MCF 10A (cell line): ENCODE measurements at regions of chr7 and their contacts with region 1.

Region 1: DNA sequence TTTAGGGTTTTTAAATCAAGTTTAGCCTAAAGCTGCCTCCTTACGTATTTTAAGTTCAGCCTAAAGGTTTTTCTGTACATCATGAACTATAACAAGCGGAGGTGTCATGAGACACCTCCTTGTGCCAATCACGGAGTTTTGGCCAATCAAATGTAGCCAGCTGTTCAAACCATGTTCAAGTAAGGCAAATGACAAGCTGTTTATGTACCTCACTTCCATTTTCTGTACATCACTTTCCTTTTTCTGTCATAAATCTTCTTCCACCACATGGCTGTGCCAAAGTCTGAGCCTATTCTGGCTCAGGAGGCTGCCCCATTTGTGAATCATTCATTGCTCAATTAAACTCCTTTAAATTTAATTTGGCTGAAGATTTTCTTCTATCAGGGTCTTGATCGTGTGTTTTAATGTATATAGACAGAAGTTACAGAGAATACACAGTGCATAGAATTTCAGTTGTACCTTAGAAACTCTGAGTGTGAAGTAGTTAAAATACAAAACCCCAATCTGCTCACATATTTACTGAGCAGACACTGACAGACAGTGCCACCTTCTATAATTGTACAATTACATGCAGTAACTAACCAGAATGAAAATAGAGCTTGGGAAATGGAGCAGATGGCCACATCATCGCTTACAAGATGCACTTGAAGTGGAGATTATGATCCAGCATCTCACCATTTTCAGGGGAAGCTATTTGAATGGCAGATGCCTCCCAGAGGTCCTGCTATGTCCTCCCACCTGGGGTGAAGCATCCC is 76.9 kb upstream of the LANCL2 start:
- DNase-seq: peak; percentile 29
- H3K4me3 Mint-ChIP-seq: no peak overlapping the region
- H3K27ac Mint-ChIP-seq: no peak overlapping the region
- H3K4me1 Mint-ChIP-seq: no peaks in the 10 kb centered on the region
- H3K27me3 Mint-ChIP-seq: peaks cover 87% of the 10 kb centered on the region
- CTCF ChIP-seq: no peak

Region 2: GRCh38 chr7:55237156-55237893 is 50.9 kb before region 1 on chr7:
- CTCF ChIA-PET with region 1: no interaction called
- POLR2A ChIA-PET with region 1: no interaction called
- intact Hi-C with region 1: no loop called
- DNase-seq: no peak
- H3K4me3 Mint-ChIP-seq: no peak overlapping the region
- H3K27ac Mint-ChIP-seq: no peak overlapping the region
- H3K4me1 Mint-ChIP-seq: no peaks in the 10 kb centered on the region
- H3K27me3 Mint-ChIP-seq: peaks cover 52% of the 10 kb centered on the region
- CTCF ChIP-seq: no peak

Region 3: DNA sequence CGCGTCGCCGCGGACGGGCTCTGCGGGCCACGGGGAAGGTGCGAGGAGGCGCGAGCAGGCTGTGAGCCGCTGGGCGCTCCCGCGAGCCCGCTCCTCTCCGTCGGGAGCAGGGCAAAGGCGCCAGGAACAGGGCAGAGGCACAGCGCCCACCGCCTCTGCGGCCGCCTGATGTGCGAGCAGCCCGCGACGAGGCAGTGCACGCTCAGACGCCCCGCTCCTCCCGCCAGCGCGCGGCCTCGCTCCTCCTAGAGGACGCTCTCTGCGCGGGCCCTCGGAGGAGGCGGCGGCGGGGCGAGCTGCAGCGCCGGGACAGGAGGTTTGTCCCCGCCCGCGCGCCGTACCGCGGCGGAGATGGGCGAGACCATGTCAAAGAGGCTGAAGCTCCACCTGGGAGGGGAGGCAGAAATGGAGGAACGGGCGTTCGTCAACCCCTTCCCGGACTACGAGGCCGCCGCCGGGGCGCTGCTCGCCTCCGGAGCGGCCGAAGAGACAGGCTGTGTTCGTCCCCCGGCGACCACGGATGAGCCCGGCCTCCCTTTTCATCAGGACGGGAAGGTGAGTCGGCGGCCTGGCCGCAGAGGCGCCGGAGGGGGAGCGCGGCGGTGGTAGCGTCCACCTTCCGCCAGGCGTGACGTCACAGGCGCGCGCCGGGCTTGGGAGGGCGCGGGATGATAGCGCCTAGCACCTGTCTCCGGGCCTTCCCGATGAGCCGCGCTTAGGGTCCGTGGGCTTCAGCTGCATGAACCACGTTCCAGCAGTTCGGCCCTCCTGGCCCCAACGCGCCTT is 77.6 kb after region 1 on chr7:
- CTCF ChIA-PET with region 1: interaction called, 8 read pairs
- POLR2A ChIA-PET with region 1: interaction called, 27 read pairs
- intact Hi-C with region 1: loop called (anchors 2 kb)
- DNase-seq: peak; percentile 96
- H3K4me3 Mint-ChIP-seq: peak overlapping the region; percentile 92
- H3K27ac Mint-ChIP-seq: peak overlapping the region; percentile 100
- H3K4me1 Mint-ChIP-seq: peaks cover 6% of the 10 kb centered on the region
- H3K27me3 Mint-ChIP-seq: no peaks in the 10 kb centered on the region
- CTCF ChIP-seq: peak; percentile 10

Region 4: DNA sequence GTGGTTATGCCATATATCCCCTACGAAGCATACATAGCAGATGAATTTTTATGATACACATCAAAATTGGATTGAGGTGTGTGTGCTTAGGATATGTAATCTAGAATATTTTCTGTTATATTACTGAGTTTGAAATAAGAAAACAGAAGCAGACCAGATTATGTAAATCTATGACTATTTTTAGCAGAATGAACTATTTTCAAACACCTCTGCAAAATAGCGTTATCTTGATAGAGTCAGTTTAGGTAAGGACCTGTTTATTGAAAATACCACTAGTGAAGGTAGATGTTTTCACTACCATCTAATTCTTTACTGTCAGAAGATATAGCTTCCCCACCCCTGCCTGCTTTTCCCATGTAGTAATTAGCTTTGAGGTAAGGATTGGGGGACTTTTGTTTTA is 86.0 kb after region 1 on chr7:
- CTCF ChIA-PET with region 1: interaction called, 15 read pairs
- POLR2A ChIA-PET with region 1: no interaction called
- intact Hi-C with region 1: no loop called
- DNase-seq: no peak
- H3K4me3 Mint-ChIP-seq: no peak overlapping the region
- H3K27ac Mint-ChIP-seq: no peak overlapping the region
- H3K4me1 Mint-ChIP-seq: no peaks in the 10 kb centered on the region
- H3K27me3 Mint-ChIP-seq: no peaks in the 10 kb centered on the region
- CTCF ChIP-seq: no peak

Region 5: DNA sequence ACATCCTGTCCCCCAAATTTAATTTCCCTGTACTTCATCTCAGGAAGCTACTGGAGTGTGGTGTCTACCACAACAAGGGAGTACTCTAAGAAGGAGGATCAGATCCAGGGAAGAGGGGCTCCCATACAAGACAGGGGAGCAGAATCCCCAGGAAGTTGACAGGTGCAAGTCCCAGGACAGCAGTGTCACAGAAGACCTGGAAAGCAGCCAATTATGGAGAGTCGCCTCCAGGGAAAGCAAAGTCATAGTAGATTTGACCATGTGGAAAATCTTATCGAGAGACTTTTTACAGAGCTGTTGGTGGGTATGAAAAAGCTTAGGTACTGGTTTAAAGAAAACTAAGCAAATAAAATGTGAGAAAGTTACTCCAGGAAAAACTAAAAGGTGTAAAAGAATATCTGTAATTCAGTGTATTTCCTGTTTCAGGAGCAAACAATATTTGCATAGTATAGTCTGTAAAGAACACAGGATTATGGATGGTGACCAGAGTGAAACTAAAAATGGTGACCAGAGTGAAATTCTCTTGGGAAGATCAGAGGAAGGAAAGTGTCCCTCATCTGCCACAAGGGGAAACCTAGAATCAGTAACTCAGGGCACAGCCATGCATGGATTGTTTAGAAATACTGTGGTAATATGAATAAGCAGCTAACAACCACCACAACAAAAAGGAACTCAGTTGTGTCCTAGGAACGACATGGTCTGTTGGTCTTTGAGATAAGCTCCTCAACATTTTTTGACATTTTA is 121.4 kb after region 1 on chr7:
- CTCF ChIA-PET with region 1: interaction called, 304 read pairs
- POLR2A ChIA-PET with region 1: no interaction called
- intact Hi-C with region 1: loop called (anchors 2 kb)
- DNase-seq: no peak
- H3K4me3 Mint-ChIP-seq: no peak overlapping the region
- H3K27ac Mint-ChIP-seq: no peak overlapping the region
- H3K4me1 Mint-ChIP-seq: no peaks in the 10 kb centered on the region
- H3K27me3 Mint-ChIP-seq: no peaks in the 10 kb centered on the region
- CTCF ChIP-seq: no peak

Region 6: DNA sequence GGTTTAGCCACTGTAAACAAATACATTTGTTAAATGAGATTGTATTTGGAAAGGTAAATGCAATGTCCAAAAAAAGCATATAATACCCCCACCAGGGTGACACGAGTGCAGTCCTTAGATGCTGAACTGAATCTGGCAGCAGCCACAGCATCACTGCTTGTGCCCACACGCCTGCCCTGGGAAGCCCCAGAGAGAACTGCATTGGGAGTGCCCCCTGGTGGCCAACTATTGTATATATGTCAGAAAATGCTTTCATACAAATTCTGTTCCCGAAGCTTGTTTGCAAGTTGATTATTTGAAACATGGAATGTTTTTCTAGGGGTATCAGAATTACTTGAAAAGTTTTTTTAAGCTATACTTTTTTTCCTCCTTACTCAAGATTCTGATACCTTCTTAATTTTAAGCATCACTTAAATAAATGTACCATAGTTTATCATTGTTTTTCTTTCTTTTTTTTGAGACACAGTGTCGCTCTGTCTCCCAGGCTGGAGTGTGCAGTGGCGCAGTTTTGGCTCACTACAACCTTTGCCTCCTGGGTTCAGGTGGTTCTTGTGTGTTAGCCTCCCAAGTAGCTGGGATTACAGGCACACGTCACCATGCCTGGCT is 127.0 kb after region 1 on chr7:
- CTCF ChIA-PET with region 1: interaction called, 304 read pairs
- POLR2A ChIA-PET with region 1: interaction called, 5 read pairs
- intact Hi-C with region 1: loop called (anchors 2 kb)
- DNase-seq: peak; percentile 81
- H3K4me3 Mint-ChIP-seq: no peak overlapping the region
- H3K27ac Mint-ChIP-seq: no peak overlapping the region
- H3K4me1 Mint-ChIP-seq: no peaks in the 10 kb centered on the region
- H3K27me3 Mint-ChIP-seq: no peaks in the 10 kb centered on the region
- CTCF ChIP-seq: peak; percentile 77

Region 7: DNA sequence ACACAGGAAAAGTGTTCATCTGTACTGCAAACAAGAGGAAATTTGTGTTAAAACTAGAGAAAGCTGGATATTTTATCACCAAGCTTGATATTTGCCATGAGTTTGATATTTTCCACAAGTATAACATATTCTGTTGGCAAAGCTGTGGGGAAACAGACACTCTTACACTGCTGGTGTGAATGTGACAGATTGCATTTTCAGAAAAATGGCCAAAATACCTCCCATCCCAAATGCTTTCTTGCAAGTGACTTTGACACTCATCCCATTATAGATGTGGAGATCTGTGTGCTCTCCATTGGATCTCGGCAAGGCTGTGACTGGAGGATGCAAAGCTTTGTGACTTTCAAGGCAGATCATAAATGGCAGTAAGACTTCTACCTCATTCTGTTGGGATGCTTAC is 629.5 kb after region 1 on chr7:
- CTCF ChIA-PET with region 1: no interaction called
- POLR2A ChIA-PET with region 1: no interaction called
- intact Hi-C with region 1: no loop called
- DNase-seq: no peak
- H3K4me3 Mint-ChIP-seq: no peak overlapping the region
- H3K27ac Mint-ChIP-seq: no peak overlapping the region
- H3K4me1 Mint-ChIP-seq: no peaks in the 10 kb centered on the region
- H3K27me3 Mint-ChIP-seq: no peaks in the 10 kb centered on the region
- CTCF ChIP-seq: no peak